Activated CD8-positive, alpha-beta T cell treated with anti-CD3 and anti-CD28 coated beads for 36 hours (primary cell): ENCODE measurements at regions of chr19 and their contacts with region 1.

Region 1: DNA sequence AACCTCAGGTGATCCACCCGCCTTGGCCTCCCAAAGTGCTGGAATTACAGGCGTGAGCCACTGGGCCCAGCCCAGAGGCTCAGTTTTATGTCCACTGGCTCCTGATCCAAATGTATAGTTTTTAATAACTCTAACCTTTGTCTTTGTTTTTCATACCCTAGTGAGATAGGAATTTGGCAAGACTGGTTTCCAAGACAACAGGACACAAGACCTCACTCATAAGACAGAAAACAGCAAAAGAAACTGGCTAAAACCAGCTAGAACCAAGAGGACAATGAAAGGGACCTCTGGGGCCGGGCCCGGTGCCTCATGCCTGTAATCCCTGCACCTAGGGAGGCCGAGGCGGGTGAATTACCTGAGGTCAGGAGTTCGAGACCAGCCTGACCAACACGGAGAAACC is 27.6 kb downstream of the CPT1C start:
- DNase-seq: no peak
- ATAC-seq: no peak
- H3K4me3 Mint-ChIP-seq: peak overlapping the region; percentile 29
- H3K27ac Mint-ChIP-seq: peak overlapping the region; percentile 42
- H3K4me1 Mint-ChIP-seq: peaks cover 8% of the 10 kb centered on the region
- H3K27me3 Mint-ChIP-seq: no peaks in the 10 kb centered on the region
- CTCF ChIP-seq: no peak

Region 2: DNA sequence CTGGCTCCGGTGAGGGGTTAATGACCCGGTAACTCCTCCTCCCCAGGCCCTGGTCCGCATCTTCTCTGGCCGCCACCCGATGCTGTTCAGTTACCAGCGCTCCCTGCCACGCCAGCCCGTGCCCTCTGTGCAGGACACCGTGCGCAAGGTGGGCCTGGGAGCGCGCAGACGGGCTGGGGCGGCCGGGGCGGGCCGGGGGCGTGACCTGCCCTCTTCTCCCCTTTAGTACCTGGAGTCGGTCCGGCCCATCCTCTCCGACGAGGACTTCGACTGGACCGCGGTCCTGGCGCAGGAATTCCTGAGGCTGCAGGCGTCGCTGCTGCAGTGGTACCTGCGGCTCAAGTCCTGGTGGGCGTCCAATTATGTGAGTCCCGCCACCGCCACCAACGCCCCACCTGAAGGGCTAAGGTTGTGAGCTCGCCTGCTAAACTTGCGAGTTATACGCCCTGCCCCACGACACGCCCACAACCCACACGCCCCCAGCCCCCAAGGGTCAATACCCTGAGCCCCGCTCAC is 17.2 kb before region 1 on chr19:
- CTCF ChIA-PET with region 1: interaction called, 11 read pairs
- POLR2A ChIA-PET with region 1: interaction called, 3 read pairs
- intact Hi-C with region 1: no loop called
- DNase-seq: no peak
- ATAC-seq: no peak
- H3K4me3 Mint-ChIP-seq: no peak overlapping the region
- H3K27ac Mint-ChIP-seq: no peak overlapping the region
- H3K4me1 Mint-ChIP-seq: no peaks in the 10 kb centered on the region
- H3K27me3 Mint-ChIP-seq: no peaks in the 10 kb centered on the region
- CTCF ChIP-seq: no peak

Region 3: DNA sequence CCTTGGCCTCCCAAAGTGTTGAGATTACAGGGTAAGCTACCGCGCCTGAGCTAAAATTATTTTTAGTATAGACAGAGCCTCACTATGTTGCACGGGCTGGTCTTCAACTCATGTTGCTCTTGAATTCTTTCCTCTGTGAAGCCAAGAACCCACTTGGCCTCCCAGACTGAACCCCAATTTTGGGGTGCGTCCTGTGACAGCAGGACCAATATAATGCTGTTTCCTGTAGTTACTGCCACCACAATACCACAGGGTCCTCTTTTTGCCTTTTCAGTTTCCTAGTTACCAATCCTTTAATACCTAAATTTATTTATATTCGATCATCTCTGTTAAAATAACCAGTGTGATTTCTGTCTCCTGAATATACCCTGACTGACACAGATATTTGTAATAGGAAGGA is 11.7 kb after region 1 on chr19:
- CTCF ChIA-PET with region 1: interaction called, 12 read pairs
- POLR2A ChIA-PET with region 1: no interaction called
- intact Hi-C with region 1: no loop called
- DNase-seq: no peak
- ATAC-seq: no peak
- H3K4me3 Mint-ChIP-seq: no peak overlapping the region
- H3K27ac Mint-ChIP-seq: no peak overlapping the region
- H3K4me1 Mint-ChIP-seq: no peaks in the 10 kb centered on the region
- H3K27me3 Mint-ChIP-seq: peaks cover 1% of the 10 kb centered on the region
- CTCF ChIP-seq: no peak